Activated CD8-positive, alpha-beta memory T cell treated with anti-CD3 and anti-CD28 coated beads, Interleukin-2, amount 10 ng/mL, durations not matched to agents 7 days and 5 days (primary cell): ENCODE measurements at regions of chr3 and their contacts with region 1.

Region 1: DNA sequence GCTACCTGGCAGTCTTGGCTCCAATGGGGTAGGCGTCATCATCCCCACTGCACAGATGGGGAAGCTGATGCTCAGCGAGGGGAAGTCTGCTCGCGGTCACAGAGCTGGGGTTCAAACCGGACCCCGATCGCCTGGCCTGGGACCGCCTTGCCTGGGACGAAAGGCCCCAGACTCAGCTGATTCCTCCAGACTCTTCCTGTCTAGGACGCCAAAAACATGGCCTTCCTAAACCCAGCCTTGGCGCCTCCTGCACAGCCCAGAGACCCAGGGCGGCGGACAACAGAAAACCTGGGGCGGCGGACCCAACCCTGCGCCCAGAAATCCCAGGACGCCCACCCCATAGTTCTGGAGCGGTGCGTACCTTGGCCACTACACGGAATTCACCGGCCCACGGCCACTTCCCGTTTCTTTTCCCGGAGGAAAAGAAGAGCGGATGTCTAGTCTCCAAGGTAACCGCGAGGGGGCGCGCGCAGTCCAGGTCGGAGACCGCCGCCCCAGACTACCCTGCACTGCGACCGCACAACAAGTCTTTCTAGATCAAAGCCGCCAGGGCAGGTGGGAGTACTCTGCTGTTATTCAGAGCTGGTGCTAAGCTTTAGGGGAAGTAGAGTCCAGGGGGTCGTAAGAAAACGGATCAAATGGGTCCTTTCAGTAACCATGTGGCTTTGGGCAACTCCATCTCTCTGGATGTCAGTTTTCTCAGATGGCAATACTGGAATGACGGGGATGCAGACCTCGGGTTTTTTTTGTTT is 4.9 kb upstream of the IL17RD start:
- DNase-seq: peak; percentile 77
- ATAC-seq: peak; percentile 84
- H3K4me3 Mint-ChIP-seq: peak overlapping the region; percentile 67
- H3K27ac Mint-ChIP-seq: no peak overlapping the region
- H3K4me1 Mint-ChIP-seq: peaks cover 9% of the 10 kb centered on the region
- H3K27me3 Mint-ChIP-seq: peaks cover 78% of the 10 kb centered on the region

Region 2: DNA sequence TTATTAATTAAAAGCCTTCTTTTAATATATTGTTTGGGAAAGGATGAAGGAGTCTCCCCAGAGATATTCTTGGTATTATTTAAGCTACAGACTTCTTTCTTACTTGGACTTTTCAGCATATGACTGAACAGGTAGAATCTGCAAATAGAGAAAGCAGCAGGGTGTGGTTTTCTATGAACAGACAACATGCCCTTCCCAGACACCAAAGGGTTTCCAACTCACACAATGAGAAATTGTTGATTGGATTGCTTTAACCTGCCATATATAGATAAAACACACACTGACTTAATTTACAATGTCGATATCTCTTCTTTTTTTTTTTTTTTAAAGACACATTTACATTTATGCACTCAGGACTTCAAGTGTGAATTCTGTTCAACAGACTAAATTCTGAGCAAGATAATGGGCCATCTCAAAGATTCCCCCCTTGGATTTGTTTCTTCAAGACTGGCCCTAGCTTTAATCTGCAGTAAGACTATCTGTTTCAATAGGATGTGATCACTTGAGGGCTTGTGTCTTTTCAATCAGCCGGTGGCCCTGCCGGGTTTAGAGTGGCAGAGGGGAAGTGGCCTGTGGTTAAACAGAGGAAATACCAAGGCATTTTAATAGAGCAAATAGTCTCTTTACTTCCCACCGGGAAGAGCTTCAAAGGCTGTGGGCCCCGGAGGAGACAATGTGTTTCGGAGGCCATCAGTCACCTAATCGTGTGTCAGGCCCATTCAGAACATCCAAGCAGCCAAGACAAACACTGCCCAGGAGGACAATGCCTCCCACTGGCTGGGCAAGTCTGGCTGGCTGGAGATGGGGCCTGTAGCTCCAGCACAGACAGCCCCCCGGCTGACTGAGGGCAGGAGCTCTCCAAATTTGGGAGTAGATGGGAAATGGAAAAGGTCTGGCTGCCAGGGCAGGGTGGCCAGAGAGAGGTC is 11.0 kb before region 1 on chr3:
- CTCF ChIA-PET with region 1: interaction called, 18 read pairs
- DNase-seq: peak; percentile 55
- ATAC-seq: peak; percentile 63
- H3K4me3 Mint-ChIP-seq: no peak overlapping the region
- H3K27ac Mint-ChIP-seq: no peak overlapping the region
- H3K4me1 Mint-ChIP-seq: peaks cover 13% of the 10 kb centered on the region
- H3K27me3 Mint-ChIP-seq: peaks cover 70% of the 10 kb centered on the region

Region 3: GRCh38 chr3:57227204-57227929 is 57.3 kb after region 1 on chr3 and contains the start of gene APPL1:
- CTCF ChIA-PET with region 1: interaction called, 15 read pairs
- DNase-seq: peak; percentile 92
- ATAC-seq: peak; percentile 95
- H3K4me3 Mint-ChIP-seq: peak within 1 kb of the TSS; percentile 93
- H3K27ac Mint-ChIP-seq: peak within 1 kb of the TSS; percentile 81
- H3K4me1 Mint-ChIP-seq: peaks cover 34% of the 10 kb centered on the region
- H3K27me3 Mint-ChIP-seq: peaks cover 5% of the 10 kb centered on the region
- total RNA-seq, gene APPL1: 31.3 to 34.4 TPM